PC-3 (cell line): ENCODE measurements at regions of chr4 and their contacts with region 1.

Region 1: DNA sequence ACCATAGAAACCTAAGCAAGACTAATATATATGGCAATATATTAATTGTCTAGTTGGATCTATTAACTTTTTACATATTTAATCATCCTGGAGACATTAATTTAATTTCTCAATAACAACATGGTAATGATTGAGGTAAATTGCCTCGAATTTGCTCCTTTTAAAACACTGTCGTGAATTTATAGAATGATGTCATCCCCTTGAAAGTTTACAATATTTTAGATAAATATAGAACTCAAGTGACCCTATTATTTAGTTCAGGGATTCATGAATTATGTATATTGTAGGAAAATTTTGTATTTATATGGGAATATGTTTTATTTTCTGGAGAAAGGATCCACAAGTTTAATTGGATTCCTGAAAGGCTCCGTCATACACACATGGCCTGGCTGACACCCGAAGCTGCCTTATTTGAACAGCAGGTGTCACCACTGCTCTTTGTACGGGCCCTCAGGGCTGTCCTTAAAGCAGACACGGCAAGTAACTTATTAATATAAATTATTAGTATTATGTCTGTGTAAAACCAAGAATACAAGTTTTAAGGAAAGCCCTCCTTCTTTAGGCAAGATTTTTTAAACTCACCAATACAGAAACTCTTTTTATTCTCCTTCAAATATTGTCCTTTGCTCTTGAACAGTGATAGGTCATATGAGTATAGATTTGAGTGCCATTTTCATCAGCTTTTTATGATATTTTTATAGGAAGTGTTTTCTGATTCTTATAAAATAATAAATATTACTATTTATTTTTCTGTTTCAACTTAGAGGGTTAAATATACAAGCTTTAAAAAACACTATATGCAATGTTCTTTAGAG is 1.9 kb upstream of the PLRG1 start:
- DNase-seq: peak; percentile 79
- ATAC-seq: peak; percentile 58
- H3K4me3 ChIP-seq: no peak overlapping the region
- H3K27ac ChIP-seq: no peak overlapping the region
- H3K4me1 ChIP-seq: peaks cover 16% of the 10 kb centered on the region
- H3K27me3 ChIP-seq: no peaks in the 10 kb centered on the region
- CTCF ChIP-seq: peak; percentile 78

Region 2: DNA sequence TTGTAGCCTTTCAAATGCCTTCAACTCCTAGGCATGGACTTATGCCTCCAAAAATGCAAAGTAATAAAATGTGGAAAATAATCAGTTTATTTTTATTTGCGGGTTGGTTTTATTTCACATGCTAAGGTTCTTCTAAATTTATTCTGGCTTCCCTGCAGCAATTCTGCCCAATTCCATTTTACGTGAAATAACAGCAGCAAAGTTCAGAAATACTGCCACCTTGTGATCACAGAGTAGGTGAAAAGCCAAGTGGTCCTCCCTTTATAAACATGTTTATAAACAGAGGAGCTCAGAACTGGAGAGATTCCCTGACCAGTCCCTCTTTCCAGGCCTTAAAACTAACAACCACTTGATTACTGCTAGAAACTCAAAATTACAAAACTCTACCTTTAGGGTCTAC is 45.8 kb before region 1 on chr4:
- CTCF ChIA-PET with region 1: no interaction called
- POLR2A ChIA-PET with region 1: no interaction called
- intact Hi-C with region 1: loop called (anchors 2 kb)
- DNase-seq: peak; percentile 45
- ATAC-seq: peak; percentile 48
- H3K4me3 ChIP-seq: no peak overlapping the region
- H3K27ac ChIP-seq: peak overlapping the region; percentile 37
- H3K4me1 ChIP-seq: peaks cover 21% of the 10 kb centered on the region
- H3K27me3 ChIP-seq: peaks cover 12% of the 10 kb centered on the region; the same call in 1 of the 2 replicates
- CTCF ChIP-seq: peak; percentile 65

Region 3: GRCh38 chr4:154529728-154530519 is 22.2 kb before region 1 on chr4:
- CTCF ChIA-PET with region 1: no interaction called
- POLR2A ChIA-PET with region 1: no interaction called
- intact Hi-C with region 1: loop called (anchors 2 kb)
- DNase-seq: no peak
- ATAC-seq: no peak
- H3K4me3 ChIP-seq: no peak overlapping the region
- H3K27ac ChIP-seq: no peak overlapping the region
- H3K4me1 ChIP-seq: no peaks in the 10 kb centered on the region
- H3K27me3 ChIP-seq: peaks cover 8% of the 10 kb centered on the region
- CTCF ChIP-seq: no peak

Region 4: GRCh38 chr4:154618708-154619315 is 66.7 kb after region 1 on chr4:
- CTCF ChIA-PET with region 1: interaction called, 11 read pairs
- POLR2A ChIA-PET with region 1: no interaction called
- intact Hi-C with region 1: loop called (anchors 1 kb)
- DNase-seq: peak; percentile 72
- ATAC-seq: peak; percentile 61; the same call in 1 of the 2 replicates
- H3K4me3 ChIP-seq: no peak overlapping the region
- H3K27ac ChIP-seq: no peak overlapping the region
- H3K4me1 ChIP-seq: no peaks in the 10 kb centered on the region
- H3K27me3 ChIP-seq: no peaks in the 10 kb centered on the region
- CTCF ChIP-seq: peak; percentile 82

Region 5: GRCh38 chr4:154720123-154720522 is 168.0 kb after region 1 on chr4:
- CTCF ChIA-PET with region 1: no interaction called
- POLR2A ChIA-PET with region 1: no interaction called
- intact Hi-C with region 1: no loop called
- DNase-seq: peak; percentile 76
- ATAC-seq: peak; percentile 94
- H3K4me3 ChIP-seq: no peak overlapping the region
- H3K27ac ChIP-seq: peak overlapping the region; percentile 42
- H3K4me1 ChIP-seq: peaks cover 27% of the 10 kb centered on the region
- H3K27me3 ChIP-seq: no peaks in the 10 kb centered on the region
- CTCF ChIP-seq: no peak

Region 6: GRCh38 chr4:154779362-154779947 is 227.4 kb after region 1 on chr4:
- CTCF ChIA-PET with region 1: no interaction called
- POLR2A ChIA-PET with region 1: no interaction called
- intact Hi-C with region 1: loop called (anchors 2 kb)
- DNase-seq: peak; percentile 49
- ATAC-seq: no peak
- H3K4me3 ChIP-seq: no peak overlapping the region
- H3K27ac ChIP-seq: no peak overlapping the region
- H3K4me1 ChIP-seq: no peaks in the 10 kb centered on the region
- H3K27me3 ChIP-seq: peaks cover 6% of the 10 kb centered on the region
- CTCF ChIP-seq: peak; percentile 73